A673 (cell line): ENCODE measurements at regions of chr5 and their contacts with region 1.

Region 1: DNA sequence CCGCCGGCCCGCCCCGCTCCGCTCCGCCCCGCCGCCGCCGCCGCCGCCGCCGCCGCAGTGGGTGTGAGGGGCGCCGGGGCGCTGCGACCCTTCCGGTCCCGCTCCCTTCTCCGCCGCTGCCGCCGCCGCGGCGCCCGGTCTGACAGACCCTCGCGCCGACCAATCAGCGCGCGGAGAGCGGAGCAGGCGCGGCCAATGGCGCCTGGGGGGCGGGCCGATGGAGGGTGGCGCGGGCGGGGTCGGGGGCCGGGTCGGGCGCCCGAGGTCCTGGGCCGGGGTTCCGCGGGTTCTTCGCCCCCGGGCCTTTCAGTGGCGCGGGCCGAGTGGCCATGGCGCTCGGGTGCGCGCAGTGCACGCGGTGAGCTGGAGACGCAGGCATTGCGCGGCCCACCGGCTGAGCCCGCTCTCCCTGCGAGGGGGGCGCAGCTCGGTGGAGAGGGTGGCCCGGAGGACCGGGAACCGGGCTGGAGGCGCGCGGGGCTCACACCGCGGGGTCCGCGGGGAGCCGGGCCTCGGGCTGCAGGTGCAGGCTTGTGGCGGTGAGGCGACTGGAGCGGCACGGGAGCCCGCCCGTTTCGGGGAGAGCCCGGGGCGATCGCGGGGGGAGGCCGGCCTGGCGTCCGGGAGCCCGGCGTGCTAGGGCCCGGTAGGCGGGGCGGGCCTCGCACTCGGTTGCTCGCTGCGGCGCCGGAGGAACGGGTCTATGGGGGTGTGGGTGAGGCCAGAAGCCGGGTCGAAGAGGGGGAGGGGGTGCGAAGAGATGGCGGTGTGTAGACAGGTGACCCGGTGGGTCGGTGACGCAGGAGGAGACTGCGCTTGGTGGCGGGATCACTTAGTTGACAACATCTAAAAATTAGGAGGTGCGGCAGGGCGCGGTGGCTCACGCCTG is at the start of gene MAPK9:
- DNase-seq: peak; percentile 84
- H3K4me3 ChIP-seq: peak within 1 kb of the TSS; percentile 93
- H3K27ac ChIP-seq: peak within 1 kb of the TSS; percentile 82
- H3K4me1 ChIP-seq: peaks cover 5% of the 10 kb centered on the region
- H3K27me3 ChIP-seq: no peaks in the 10 kb centered on the region
- CTCF ChIP-seq: no peak
- total RNA-seq, gene MAPK9: 31.3 and 34.4 TPM in 2 replicates

Region 2: GRCh38 chr5:180328296-180329137 is 36.3 kb after region 1 on chr5:
- CTCF ChIA-PET with region 1: interaction called, 12 read pairs
- POLR2A ChIA-PET with region 1: no interaction called
- intact Hi-C with region 1: loop called (anchors 5 kb)
- DNase-seq: peak; percentile 86
- H3K4me3 ChIP-seq: no peak overlapping the region
- H3K27ac ChIP-seq: no peak overlapping the region
- H3K4me1 ChIP-seq: no peaks in the 10 kb centered on the region
- H3K27me3 ChIP-seq: no peaks in the 10 kb centered on the region
- CTCF ChIP-seq: peak; percentile 77

Region 3: GRCh38 chr5:180334751-180335613 is 42.8 kb after region 1 on chr5:
- CTCF ChIA-PET with region 1: interaction called, 12 read pairs
- POLR2A ChIA-PET with region 1: no interaction called
- intact Hi-C with region 1: no loop called
- DNase-seq: no peak
- H3K4me3 ChIP-seq: no peak overlapping the region
- H3K27ac ChIP-seq: no peak overlapping the region
- H3K4me1 ChIP-seq: no peaks in the 10 kb centered on the region
- H3K27me3 ChIP-seq: no peaks in the 10 kb centered on the region
- CTCF ChIP-seq: no peak